ENCODE measurements at regions of chr7 and their contacts with region 1.

Region 1: GRCh38 chr7:124929467-124930172 is at the start of gene POT1:
- DNase-seq: peak; percentile 100
- ATAC-seq: peak; percentile 100
- H3K4me3 ChIP-seq: peak within 1 kb of the TSS; percentile 79
- H3K27ac ChIP-seq: peak within 1 kb of the TSS; percentile 56
- H3K4me1 ChIP-seq: no peaks in the 10 kb centered on the region
- H3K27me3 ChIP-seq: no peaks in the 10 kb centered on the region
- CTCF ChIP-seq: no peak
- POLR2A ChIP-seq: peak; percentile 67
- RAD21 ChIP-seq: no peak
- total RNA-seq, gene POT1: 28.5 and 30.6 TPM in 2 replicates

Region 2: GRCh38 chr7:124992766-124993562 is 63.3 kb after region 1 on chr7:
- CTCF ChIA-PET with region 1: no interaction called
- POLR2A ChIA-PET with region 1: no interaction called
- dilution Hi-C with region 1: no loop called
- in situ Hi-C with region 1: no loop called
- intact Hi-C with region 1: loop called (anchors 5 kb)
- DNase-seq: peak; percentile 92
- ATAC-seq: peak; percentile 94
- H3K4me3 ChIP-seq: peak overlapping the region; percentile 13; the same call in 1 of the 2 replicates
- H3K27ac ChIP-seq: peak overlapping the region; percentile 89
- H3K4me1 ChIP-seq: peaks cover 5% of the 10 kb centered on the region; the same call in 1 of the 2 replicates
- H3K27me3 ChIP-seq: no peaks in the 10 kb centered on the region
- CTCF ChIP-seq: no peak
- POLR2A ChIP-seq: no peak
- RAD21 ChIP-seq: no peak

Region 3: GRCh38 chr7:125074141-125074540 is 144.5 kb after region 1 on chr7:
- CTCF ChIA-PET with region 1: no interaction called
- POLR2A ChIA-PET with region 1: no interaction called
- dilution Hi-C with region 1: no loop called
- in situ Hi-C with region 1: no loop called
- intact Hi-C with region 1: no loop called
- DNase-seq: no peak
- ATAC-seq: no peak
- H3K4me3 ChIP-seq: no peak overlapping the region
- H3K27ac ChIP-seq: no peak overlapping the region
- H3K4me1 ChIP-seq: no peaks in the 10 kb centered on the region
- H3K27me3 ChIP-seq: no peaks in the 10 kb centered on the region
- CTCF ChIP-seq: no peak
- POLR2A ChIP-seq: no peak
- RAD21 ChIP-seq: no peak